CD8-positive, alpha-beta T cell (primary cell): ENCODE measurements at regions of chr6 and their contacts with region 1.

Region 1: GRCh38 chr6:106629103-106629858 is at the starts of genes QRSL1 and RTN4IP1:
- DNase-seq: peak; percentile 70 to 95 (median 82)
- ATAC-seq: peak; percentile 90
- H3K4me3 ChIP-seq: peak within 1 kb of the TSS; percentile 86 to 93
- H3K4me3 Mint-ChIP-seq: peak within 1 kb of the TSS; percentile 99
- H3K27ac ChIP-seq: peak within 1 kb of the TSS; percentile 83 to 88
- H3K27ac Mint-ChIP-seq: peak within 1 kb of the TSS; percentile 99
- H3K4me1 ChIP-seq: peaks cover 19% of the 10 kb centered on the region
- H3K4me1 Mint-ChIP-seq: peaks cover 43% of the 10 kb centered on the region
- H3K27me3 ChIP-seq: no peaks in the 10 kb centered on the region
- H3K27me3 Mint-ChIP-seq: no peaks in the 10 kb centered on the region
- CTCF ChIP-seq: no peak
- total RNA-seq, gene QRSL1: 11.1 to 11.6 TPM
- total RNA-seq, gene RTN4IP1: 1.8 to 1.9 TPM

Region 2: GRCh38 chr6:106339334-106340029 is 289.8 kb before region 1 on chr6:
- CTCF ChIA-PET with region 1: no interaction called
- POLR2A ChIA-PET with region 1: no interaction called
- intact Hi-C with region 1: loop called in 1 of 2 experiments (anchors 5 kb)
- DNase-seq: peak in 7 of 9 experiments; percentile 3 to 70 (median 43)
- ATAC-seq: peak; percentile 84
- H3K4me3 ChIP-seq: no peak overlapping the region
- H3K4me3 Mint-ChIP-seq: peak overlapping the region; percentile 33
- H3K27ac ChIP-seq: no peak overlapping the region
- H3K27ac Mint-ChIP-seq: no peak overlapping the region
- H3K4me1 ChIP-seq: no peaks in the 10 kb centered on the region
- H3K4me1 Mint-ChIP-seq: peaks cover 6% of the 10 kb centered on the region
- H3K27me3 ChIP-seq: peaks cover 0 to 2% of the 10 kb centered on the region in 2 experiments
- H3K27me3 Mint-ChIP-seq: peaks cover 23% of the 10 kb centered on the region
- CTCF ChIP-seq: peak; percentile 74

Region 3: DNA sequence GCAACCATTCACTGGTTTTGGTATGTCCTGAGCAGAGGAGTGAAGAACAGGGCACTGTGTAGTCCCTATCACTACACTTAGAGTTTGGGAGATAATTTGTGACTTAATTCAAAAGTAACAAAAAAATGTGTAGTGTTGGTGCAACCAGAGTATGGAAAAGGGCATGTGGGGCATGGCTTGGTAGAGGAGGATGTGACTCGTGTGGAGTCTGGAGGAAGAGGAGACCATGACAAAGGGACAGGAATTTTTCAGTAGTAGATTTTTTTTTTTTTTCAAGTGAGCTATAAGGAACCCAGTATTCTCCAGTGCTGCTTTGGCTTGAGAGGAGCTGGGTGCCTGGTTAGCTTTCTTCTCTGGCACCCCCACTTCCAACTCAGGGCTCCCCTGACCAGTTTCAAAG is 403.8 kb after region 1 on chr6:
- CTCF ChIA-PET with region 1: no interaction called
- POLR2A ChIA-PET with region 1: no interaction called
- intact Hi-C with region 1: loop called (anchors 1 to 2 kb)
- DNase-seq: no peak
- ATAC-seq: no peak
- H3K4me3 ChIP-seq: no peak overlapping the region
- H3K4me3 Mint-ChIP-seq: no peak overlapping the region
- H3K27ac ChIP-seq: no peak overlapping the region
- H3K27ac Mint-ChIP-seq: no peak overlapping the region
- H3K4me1 ChIP-seq: peaks cover 10% of the 10 kb centered on the region
- H3K4me1 Mint-ChIP-seq: peaks cover 45% of the 10 kb centered on the region
- H3K27me3 ChIP-seq: no peaks in the 10 kb centered on the region
- H3K27me3 Mint-ChIP-seq: no peaks in the 10 kb centered on the region
- CTCF ChIP-seq: no peak